ENCODE measurements at regions of chr21 and their contacts with region 1.

Region 1: DNA sequence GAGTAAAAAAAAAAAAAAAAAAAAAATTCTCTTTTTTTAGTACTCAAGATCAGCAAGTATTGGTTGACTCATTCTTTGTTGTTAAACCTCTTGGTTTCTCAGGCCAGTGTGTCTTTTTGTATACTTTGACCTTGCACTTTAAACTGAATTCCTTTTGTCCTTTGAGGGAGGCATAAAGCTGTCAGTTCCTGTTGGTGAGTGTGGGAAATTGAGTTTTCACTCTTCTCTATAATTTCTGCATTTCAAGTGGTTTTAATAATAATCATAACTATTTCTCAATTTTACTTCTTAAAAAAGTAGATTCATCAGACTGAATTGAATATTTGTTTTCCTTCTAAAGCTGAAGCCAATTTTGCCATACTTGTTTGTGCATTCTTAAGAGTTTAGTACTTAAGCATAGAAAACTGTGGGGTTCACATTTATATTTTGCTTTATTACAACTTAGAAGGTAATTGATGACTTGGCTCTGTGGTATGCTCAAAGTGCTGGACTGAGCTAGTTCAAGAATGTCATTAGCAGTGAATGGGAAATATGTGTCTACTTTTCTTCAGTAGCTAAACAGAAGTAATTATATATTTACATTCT is 43.4 kb downstream of the ITSN1 start:
- DNase-seq: peak; percentile 18
- H3K4me3 ChIP-seq: no peak overlapping the region
- H3K27ac ChIP-seq: no peak overlapping the region
- H3K27me3 ChIP-seq: no peaks in the 10 kb centered on the region
- CTCF ChIP-seq: no peak

Region 2: GRCh38 chr21:33655591-33656221 is 30.0 kb before region 1 on chr21:
- CTCF ChIA-PET with region 1: no interaction called
- POLR2A ChIA-PET with region 1: interaction called, 13 read pairs
- DNase-seq: peak; percentile 88
- H3K4me3 ChIP-seq: no peak overlapping the region
- H3K27ac ChIP-seq: peak overlapping the region; percentile 82
- H3K27me3 ChIP-seq: no peaks in the 10 kb centered on the region
- CTCF ChIP-seq: no peak

Region 3: DNA sequence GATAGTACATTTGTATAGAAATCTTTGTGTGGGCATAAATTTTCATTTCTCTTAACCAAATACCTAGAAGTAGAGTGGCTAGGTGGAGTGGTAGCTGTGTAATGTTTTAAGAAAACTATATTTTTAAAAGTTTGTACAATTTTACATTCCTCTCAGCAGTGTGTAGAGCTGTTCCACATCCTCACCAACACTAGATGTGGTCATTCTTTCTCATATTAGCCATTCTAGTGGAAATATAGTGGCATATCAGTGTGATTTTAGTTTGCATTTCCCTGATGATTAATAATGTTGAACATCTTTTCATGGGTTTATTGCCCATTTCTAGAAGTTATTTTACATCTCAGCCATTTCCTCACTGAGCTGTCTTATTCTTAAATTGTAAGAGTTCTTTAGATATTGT is 22.1 kb after region 1 on chr21:
- CTCF ChIA-PET with region 1: interaction called, 10 read pairs
- POLR2A ChIA-PET with region 1: no interaction called
- DNase-seq: no peak
- H3K4me3 ChIP-seq: no peak overlapping the region
- H3K27ac ChIP-seq: no peak overlapping the region
- H3K27me3 ChIP-seq: no peaks in the 10 kb centered on the region
- CTCF ChIP-seq: no peak